ENCODE measurements at regions of chr1 and their contacts with region 1.

Region 1: DNA sequence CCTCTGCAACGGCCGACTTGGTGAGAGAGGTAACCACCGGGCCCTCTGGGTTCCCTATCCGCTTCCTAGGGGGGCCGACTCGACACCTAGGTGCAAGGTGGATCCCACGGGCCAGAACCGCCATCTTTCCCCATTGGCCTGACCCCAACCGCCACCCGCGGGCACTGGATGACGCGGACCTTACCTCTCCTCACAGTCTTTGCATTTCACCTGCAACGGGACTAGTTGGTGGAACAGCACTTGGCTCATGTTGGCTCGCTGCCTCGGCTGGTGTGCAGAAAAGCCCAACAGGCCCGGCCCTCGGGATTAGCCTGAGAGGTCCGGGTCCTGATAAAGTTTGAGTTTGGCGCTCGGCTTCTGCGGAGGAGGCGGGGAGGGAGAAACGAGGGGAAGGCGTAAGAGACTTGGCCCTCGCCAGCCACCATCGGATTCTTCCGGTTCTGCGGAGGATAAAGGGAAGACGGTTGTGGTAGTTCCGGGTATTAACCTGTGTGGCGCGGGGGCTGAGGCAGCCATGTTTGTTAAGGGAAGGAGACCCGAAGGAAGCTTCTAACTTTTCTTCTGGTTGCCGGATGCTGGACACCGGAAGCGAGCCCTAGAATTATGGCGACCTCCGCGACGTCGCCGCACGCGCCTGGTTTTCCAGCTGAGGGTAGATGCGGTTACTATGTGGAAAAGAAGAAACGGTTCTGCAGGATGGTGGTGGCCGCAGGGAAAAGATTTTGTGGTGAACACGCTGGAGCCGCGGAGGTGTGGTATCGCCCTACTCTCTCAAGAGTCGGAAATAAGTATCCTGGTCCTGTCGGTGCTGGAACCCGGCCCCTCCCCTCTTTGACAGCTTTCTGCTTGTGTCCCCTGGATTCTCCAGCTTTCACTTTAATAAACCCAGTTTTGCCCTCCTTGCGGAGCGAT is at the starts of genes SASS6 and TRMT13:
- DNase-seq: peak; percentile 86 to 97 (median 93)
- ATAC-seq: peak; percentile 97
- H3K4me3 ChIP-seq: peak within 1 kb of the TSS; percentile 83
- H3K4me3 Mint-ChIP-seq: peak within 1 kb of the TSS; percentile 99
- H3K27ac ChIP-seq: peak within 1 kb of the TSS; percentile 71 to 72
- H3K27ac Mint-ChIP-seq: peak within 1 kb of the TSS; percentile 98
- H3K4me1 ChIP-seq: peaks cover 14% of the 10 kb centered on the region
- H3K4me1 Mint-ChIP-seq: peaks cover 44% of the 10 kb centered on the region
- H3K27me3 ChIP-seq: no peaks in the 10 kb centered on the region
- H3K27me3 Mint-ChIP-seq: no peaks in the 10 kb centered on the region
- CTCF ChIP-seq: no peak
- total RNA-seq, gene SASS6: 1.2 TPM
- total RNA-seq, gene TRMT13: 6.5 to 7.2 TPM

Region 2: GRCh38 chr1:99849744-99850458 is 282.9 kb before region 1 on chr1 and contains the start of gene AGL:
- CTCF ChIA-PET with region 1: no interaction called
- POLR2A ChIA-PET with region 1: no interaction called
- intact Hi-C with region 1: loop called (anchors 2 to 5 kb)
- DNase-seq: peak; percentile 75 to 92 (median 86)
- ATAC-seq: peak; percentile 95
- H3K4me3 ChIP-seq: peak within 1 kb of the TSS; percentile 80 to 96
- H3K4me3 Mint-ChIP-seq: peak within 1 kb of the TSS; percentile 95
- H3K27ac ChIP-seq: peak within 1 kb of the TSS; percentile 70 to 74
- H3K27ac Mint-ChIP-seq: peak within 1 kb of the TSS; percentile 94
- H3K4me1 ChIP-seq: peaks cover 14% of the 10 kb centered on the region
- H3K4me1 Mint-ChIP-seq: peaks cover 42% of the 10 kb centered on the region
- H3K27me3 ChIP-seq: no peaks in the 10 kb centered on the region
- H3K27me3 Mint-ChIP-seq: no peaks in the 10 kb centered on the region
- CTCF ChIP-seq: no peak
- total RNA-seq, gene AGL: 7.6 to 8.4 TPM

Region 3: DNA sequence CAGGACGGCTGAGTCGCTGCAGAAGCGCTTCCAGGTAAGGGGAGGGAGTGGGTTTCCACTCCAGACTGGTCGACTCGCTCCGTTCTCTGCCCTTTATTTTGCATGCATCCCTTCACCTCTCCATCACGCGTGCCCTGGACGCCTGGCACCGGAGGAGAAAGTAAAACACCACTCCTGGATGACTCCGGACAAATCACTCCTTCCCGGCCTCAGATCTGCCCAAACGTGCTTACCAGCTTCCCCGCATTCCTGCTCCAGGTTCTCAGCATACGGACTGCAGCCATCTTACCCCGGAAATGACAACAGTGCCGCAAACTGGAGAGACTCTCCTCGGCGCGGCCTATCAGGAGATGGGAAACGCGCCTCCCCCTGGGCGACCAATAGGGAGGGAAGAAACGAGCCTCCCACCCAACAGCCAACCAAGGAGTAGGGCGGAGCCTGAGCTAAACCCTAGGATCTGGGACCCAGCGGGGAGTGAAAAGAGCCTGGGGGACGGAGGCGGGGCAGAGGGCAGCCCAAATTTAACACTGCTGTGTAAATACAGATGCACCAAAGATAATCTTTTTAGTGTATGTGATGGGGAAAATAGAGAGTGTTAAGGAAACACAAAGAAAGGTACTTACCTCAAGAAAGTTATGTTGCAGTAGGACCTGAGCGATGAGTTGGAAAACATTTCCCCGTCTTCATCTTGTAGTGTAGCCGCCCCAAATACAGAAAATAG is 116.9 kb after region 1 on chr1 and contains the start of gene DBT:
- CTCF ChIA-PET with region 1: no interaction called
- POLR2A ChIA-PET with region 1: no interaction called
- intact Hi-C with region 1: loop called (anchors 1 to 2 kb)
- DNase-seq: peak; percentile 77 to 96 (median 92)
- ATAC-seq: peak; percentile 100
- H3K4me3 ChIP-seq: peak within 1 kb of the TSS; percentile 68 to 92
- H3K4me3 Mint-ChIP-seq: no peak within 1 kb of the TSS
- H3K27ac ChIP-seq: peak within 1 kb of the TSS; percentile 71 to 87
- H3K27ac Mint-ChIP-seq: no peak within 1 kb of the TSS
- H3K4me1 ChIP-seq: peaks cover 20% of the 10 kb centered on the region
- H3K4me1 Mint-ChIP-seq: peaks cover 18% of the 10 kb centered on the region
- H3K27me3 ChIP-seq: no peaks in the 10 kb centered on the region
- H3K27me3 Mint-ChIP-seq: no peaks in the 10 kb centered on the region
- CTCF ChIP-seq: no peak
- total RNA-seq, gene DBT: 4.6 to 4.9 TPM

Region 4: DNA sequence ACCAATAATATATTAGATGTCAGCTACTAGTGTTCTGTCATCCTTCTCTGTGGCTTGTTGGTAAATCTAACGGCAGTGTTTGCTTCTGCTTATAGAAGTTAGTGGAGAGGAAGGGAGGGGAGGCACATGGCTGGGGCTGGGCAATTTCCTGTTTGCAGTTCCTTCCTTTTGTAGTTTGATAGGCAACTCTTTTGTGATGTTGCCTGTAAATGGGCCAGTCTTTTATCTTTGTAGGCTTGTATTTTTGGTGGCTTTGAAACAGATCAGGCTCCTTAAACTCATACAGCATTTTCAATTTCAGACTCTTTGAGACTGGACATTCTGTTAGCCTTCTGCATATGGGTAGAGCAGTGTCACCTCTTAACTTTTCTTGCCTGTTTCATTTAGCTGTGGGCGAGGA is 267.6 kb after region 1 on chr1:
- CTCF ChIA-PET with region 1: no interaction called
- POLR2A ChIA-PET with region 1: no interaction called
- intact Hi-C with region 1: loop called in 1 of 2 experiments (anchors 5 kb)
- DNase-seq: peak; percentile 39 to 90 (median 66)
- ATAC-seq: peak; percentile 82
- H3K4me3 ChIP-seq: peak overlapping the region; percentile 13 to 19
- H3K4me3 Mint-ChIP-seq: peak overlapping the region; percentile 73
- H3K27ac ChIP-seq: peak overlapping the region; percentile 59 to 80
- H3K27ac Mint-ChIP-seq: peak overlapping the region; percentile 92
- H3K4me1 ChIP-seq: peaks cover 93% of the 10 kb centered on the region
- H3K4me1 Mint-ChIP-seq: peaks cover 86% of the 10 kb centered on the region
- H3K27me3 ChIP-seq: no peaks in the 10 kb centered on the region
- H3K27me3 Mint-ChIP-seq: no peaks in the 10 kb centered on the region
- CTCF ChIP-seq: no peak

Measured in CD8-positive, alpha-beta T cell (primary cell).